ENCODE measurements at regions of chr12 and their contacts with region 1.

Region 1: DNA sequence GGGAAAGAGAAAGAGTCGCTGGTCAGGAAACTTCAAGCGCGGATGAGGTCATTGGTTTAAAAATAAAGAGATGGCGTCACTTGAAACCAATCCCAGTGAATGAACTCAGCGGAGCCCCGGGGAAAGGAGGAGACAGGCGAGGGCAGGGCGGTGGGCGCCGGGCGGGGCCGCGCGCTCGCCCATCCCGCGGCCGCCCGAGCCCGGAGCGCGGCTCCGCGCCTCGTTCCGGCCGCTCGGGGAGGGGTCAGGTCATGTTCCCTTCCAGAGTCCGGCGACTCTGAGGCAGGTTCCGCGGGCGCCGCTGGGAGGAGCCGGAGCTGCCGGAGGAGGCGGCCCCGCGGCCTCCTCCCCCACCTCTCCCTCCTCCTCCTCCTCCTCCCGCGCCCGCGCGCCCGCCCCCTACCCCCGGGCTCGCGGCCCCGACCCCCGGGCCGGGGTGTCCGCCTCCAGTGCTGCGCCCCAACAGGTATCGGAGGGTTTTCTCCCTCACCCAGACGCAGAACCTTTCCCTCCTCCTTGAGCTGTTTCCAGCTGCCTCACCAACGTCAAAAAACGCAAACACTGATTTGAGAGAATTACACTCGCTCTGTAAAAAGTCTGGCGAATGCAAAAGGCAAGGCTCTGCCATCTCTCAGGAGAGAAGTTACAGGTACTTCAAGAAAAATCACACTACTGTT is at the start of gene DUSP16:
- DNase-seq: peak; percentile 94
- H3K4me3 Mint-ChIP-seq: peak within 1 kb of the TSS; percentile 66
- H3K27ac Mint-ChIP-seq: peak within 1 kb of the TSS; percentile 93
- H3K4me1 Mint-ChIP-seq: peaks cover 28% of the 10 kb centered on the region
- H3K27me3 Mint-ChIP-seq: no peaks in the 10 kb centered on the region
- CTCF ChIP-seq: no peak
- total RNA-seq, gene DUSP16: 23.4 and 25.8 TPM in 2 replicates

Region 2: GRCh38 chr12:12398026-12398859 is 164.5 kb before region 1 on chr12:
- CTCF ChIA-PET with region 1: interaction called, 5 read pairs
- intact Hi-C with region 1: loop called (anchors 5 kb)
- DNase-seq: peak; percentile 77
- H3K4me3 Mint-ChIP-seq: peak overlapping the region; percentile 0
- H3K27ac Mint-ChIP-seq: peak overlapping the region; percentile 67
- H3K4me1 Mint-ChIP-seq: peaks cover 49% of the 10 kb centered on the region
- H3K27me3 Mint-ChIP-seq: no peaks in the 10 kb centered on the region
- CTCF ChIP-seq: no peak

Region 3: DNA sequence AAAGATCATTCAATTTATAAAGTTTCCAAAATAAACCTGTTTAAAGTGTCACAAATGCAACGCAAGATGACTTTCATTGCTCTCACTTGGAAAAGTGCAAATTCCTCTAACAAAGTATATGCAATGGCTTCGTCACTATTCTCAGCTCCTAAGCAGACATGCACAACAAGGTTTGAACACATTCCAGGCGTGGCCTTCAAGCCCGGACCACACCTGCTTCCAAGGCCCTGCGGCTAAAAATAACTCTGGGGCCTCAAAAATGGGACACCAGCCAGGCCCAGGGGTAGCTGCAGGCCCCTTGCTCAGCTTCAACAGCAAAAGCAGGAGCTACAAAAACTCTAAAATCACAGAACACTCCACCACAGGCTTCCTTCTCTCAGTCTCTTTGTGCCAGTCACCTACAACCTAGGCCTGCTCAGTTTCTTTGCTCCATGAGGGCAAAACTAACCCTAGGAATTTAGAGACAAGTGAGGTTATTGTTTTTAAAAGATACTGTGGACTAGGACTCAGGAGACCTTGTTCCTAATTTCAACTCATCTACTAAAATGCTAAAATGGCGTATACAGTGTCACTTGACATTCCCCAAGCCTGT is 29.4 kb before region 1 on chr12:
- CTCF ChIA-PET with region 1: no interaction called
- intact Hi-C with region 1: loop called (anchors 2 kb)
- DNase-seq: peak; percentile 46
- H3K4me3 Mint-ChIP-seq: no peak overlapping the region
- H3K27ac Mint-ChIP-seq: no peak overlapping the region
- H3K4me1 Mint-ChIP-seq: peaks cover 29% of the 10 kb centered on the region
- H3K27me3 Mint-ChIP-seq: no peaks in the 10 kb centered on the region
- CTCF ChIP-seq: no peak

Region 4: DNA sequence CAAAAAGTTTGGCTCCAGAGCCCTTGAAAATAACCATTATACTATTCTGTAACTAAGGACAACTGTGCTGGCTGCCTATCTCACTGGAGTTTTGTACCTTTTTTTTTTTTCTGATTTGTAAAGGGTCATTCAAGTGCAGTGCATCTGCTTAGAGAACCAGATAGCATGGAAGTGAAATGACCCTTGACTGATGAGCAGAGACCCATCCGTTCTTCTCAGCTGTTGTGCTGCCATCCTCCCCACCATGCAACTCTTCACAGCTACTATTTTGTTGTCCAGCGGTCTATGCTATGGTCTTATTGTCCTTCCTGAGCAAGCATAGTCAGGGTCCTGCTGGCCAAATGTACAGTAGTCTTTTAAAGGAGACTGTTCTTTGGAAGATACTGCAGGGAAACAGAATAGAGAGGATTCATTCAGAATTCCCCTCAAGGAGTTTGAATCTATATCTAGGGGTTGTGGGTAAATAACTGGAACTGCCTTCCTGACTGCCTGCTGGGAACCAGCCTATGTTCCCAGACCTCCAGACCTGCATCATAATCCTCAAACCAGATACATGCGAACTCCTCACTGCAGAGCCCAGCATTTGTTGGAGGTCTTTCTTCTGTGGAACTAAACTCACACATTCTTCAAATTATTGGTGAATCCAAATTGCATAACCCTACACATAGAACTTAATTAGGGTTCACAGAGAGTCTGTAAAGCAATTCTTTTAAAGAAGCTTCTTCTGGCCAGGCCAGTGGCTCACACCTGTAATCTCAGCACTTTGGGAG is 92.2 kb after region 1 on chr12:
- CTCF ChIA-PET with region 1: no interaction called
- intact Hi-C with region 1: loop called (anchors 5 kb)
- DNase-seq: no peak
- H3K4me3 Mint-ChIP-seq: no peak overlapping the region
- H3K27ac Mint-ChIP-seq: no peak overlapping the region
- H3K4me1 Mint-ChIP-seq: no peaks in the 10 kb centered on the region
- H3K27me3 Mint-ChIP-seq: no peaks in the 10 kb centered on the region
- CTCF ChIP-seq: no peak